WTC11 (cell line): ENCODE measurements at regions of chr19 and their contacts with region 1.

Region 1: DNA sequence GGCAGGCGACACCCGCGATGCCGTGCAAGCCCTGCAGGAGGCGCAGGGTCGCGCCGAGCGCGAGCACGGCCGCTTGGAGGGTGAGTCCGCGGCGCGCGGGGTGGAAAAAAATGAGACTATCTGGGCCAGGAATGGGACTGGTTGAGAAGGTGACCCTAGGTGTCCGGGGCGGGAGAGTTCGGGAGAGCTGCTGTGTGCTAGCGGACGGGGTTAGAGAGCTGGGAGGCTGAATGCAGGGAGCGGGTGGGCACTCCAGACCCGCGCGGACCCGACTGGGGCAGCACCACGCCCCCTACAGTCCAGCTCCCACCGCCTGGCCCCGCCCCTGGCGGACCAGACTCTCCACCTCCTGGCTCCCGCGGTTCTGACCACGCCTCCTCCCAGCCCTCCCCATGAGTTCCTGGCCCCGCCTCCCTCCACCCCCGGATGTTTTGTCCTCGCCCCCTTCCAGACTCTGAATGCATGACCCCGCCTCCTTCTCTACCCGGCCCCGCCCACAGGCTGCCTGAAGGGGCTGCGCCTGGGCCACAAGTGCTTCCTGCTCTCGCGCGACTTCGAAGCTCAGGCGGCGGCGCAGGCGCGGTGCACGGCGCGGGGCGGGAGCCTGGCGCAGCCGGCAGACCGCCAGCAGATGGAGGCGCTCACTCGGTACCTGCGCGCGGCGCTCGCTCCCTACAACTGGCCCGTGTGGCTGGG is 1.5 kb downstream of the CLEC11A start:
- DNase-seq: peak; percentile 100
- ATAC-seq: peak; percentile 74
- H3K4me3 Mint-ChIP-seq: peak overlapping the region; percentile 90
- H3K27ac Mint-ChIP-seq: peak overlapping the region; percentile 82
- H3K4me1 Mint-ChIP-seq: peaks cover 55% of the 10 kb centered on the region
- H3K27me3 Mint-ChIP-seq: peaks cover 43% of the 10 kb centered on the region
- CTCF ChIP-seq: peak; percentile 77

Region 2: DNA sequence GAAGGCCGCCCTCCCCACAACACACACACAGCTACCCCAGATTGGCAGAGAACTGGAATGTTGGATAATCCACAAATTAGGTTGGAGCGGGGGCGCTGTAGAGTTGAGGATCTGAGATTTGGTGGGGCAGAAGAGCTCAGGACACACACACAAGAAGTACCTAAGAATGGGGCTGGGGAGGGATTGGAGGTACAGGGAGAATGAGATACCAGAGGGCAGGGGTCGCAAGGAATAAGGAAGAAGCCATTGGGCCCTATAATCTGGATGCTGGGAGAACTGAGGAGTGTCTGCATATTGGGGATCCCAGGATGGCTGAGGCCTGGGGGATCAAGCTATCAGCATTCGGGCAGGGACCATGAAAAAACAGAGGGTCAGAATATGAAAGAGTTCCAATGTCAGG is 96.5 kb before region 1 on chr19:
- CTCF ChIA-PET with region 1: interaction called, 13 read pairs
- POLR2A ChIA-PET with region 1: no interaction called
- DNase-seq: no peak
- ATAC-seq: no peak; the same call in 1 of the 2 replicates
- H3K4me3 Mint-ChIP-seq: no peak overlapping the region
- H3K27ac Mint-ChIP-seq: no peak overlapping the region
- H3K4me1 Mint-ChIP-seq: no peaks in the 10 kb centered on the region
- H3K27me3 Mint-ChIP-seq: peaks cover 4% of the 10 kb centered on the region
- CTCF ChIP-seq: no peak

Region 3: GRCh38 chr19:50695251-50696093 is 29.2 kb before region 1 on chr19:
- CTCF ChIA-PET with region 1: interaction called, 11 read pairs
- POLR2A ChIA-PET with region 1: no interaction called
- DNase-seq: peak; percentile 61
- ATAC-seq: peak; percentile 64
- H3K4me3 Mint-ChIP-seq: peak overlapping the region; percentile 61
- H3K27ac Mint-ChIP-seq: no peak overlapping the region
- H3K4me1 Mint-ChIP-seq: peaks cover 16% of the 10 kb centered on the region
- H3K27me3 Mint-ChIP-seq: peaks cover 92% of the 10 kb centered on the region
- CTCF ChIP-seq: no peak

Region 4: GRCh38 chr19:50712833-50713232 is 11.8 kb before region 1 on chr19:
- CTCF ChIA-PET with region 1: interaction called, 18 read pairs
- POLR2A ChIA-PET with region 1: no interaction called
- DNase-seq: no peak
- ATAC-seq: no peak
- H3K4me3 Mint-ChIP-seq: no peak overlapping the region
- H3K27ac Mint-ChIP-seq: no peak overlapping the region
- H3K4me1 Mint-ChIP-seq: peaks cover 15% of the 10 kb centered on the region
- H3K27me3 Mint-ChIP-seq: peaks cover 30% of the 10 kb centered on the region
- CTCF ChIP-seq: no peak

Region 5: GRCh38 chr19:50777754-50778303 is 53.2 kb after region 1 on chr19:
- CTCF ChIA-PET with region 1: interaction called, 195 read pairs
- POLR2A ChIA-PET with region 1: interaction called, 7 read pairs
- DNase-seq: peak; percentile 71
- ATAC-seq: peak; percentile 54
- H3K4me3 Mint-ChIP-seq: peak overlapping the region; percentile 59
- H3K27ac Mint-ChIP-seq: 0 out of 2 replicates have a peak overlapping the region, but pooled peaks have one; percentile 51
- H3K4me1 Mint-ChIP-seq: peaks cover 24% of the 10 kb centered on the region
- H3K27me3 Mint-ChIP-seq: peaks cover 95% of the 10 kb centered on the region
- CTCF ChIP-seq: no peak

Region 6: DNA sequence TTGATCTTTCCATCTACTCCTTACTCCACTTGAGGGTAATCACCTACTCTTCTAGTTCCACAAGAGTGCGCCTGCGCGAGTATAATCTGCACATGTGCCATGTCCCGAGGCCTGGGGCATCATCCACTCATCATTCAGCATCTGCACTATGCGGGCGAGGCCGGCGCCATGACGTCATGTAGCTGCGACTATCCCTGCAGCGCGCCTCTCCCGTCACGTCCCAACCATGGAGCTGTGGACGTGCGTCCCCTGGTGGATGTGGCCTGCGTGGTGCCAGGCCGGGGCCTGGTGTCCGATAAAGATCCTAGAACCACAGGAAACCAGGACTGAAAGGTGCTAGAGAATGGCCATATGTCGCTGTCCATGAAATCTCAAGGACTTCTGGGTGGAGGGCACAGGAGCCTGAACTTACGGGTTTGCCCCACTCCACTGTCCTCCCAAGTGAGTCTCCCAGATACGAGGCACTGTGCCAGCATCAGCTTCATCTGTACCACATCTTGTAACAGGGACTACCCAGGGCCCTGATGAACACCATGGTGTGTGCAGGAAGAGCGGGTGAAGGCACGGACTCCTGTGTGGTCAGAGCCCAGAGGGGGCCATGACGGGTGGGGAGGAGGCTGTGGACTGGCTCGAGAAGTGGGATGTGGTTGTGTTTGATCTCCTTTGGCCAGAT is 145.9 kb after region 1 on chr19:
- CTCF ChIA-PET with region 1: no interaction called
- POLR2A ChIA-PET with region 1: no interaction called
- DNase-seq: peak; percentile 44
- ATAC-seq: peak; percentile 75
- H3K4me3 Mint-ChIP-seq: no peak overlapping the region
- H3K27ac Mint-ChIP-seq: no peak overlapping the region
- H3K4me1 Mint-ChIP-seq: no peaks in the 10 kb centered on the region
- H3K27me3 Mint-ChIP-seq: peaks cover 60% of the 10 kb centered on the region
- CTCF ChIP-seq: 0 out of 2 replicates have a peak, but pooled peaks have one; percentile 23

Region 7: GRCh38 chr19:50943074-50943828 is 218.6 kb after region 1 on chr19:
- CTCF ChIA-PET with region 1: no interaction called
- POLR2A ChIA-PET with region 1: no interaction called
- DNase-seq: no peak
- ATAC-seq: no peak
- H3K4me3 Mint-ChIP-seq: no peak overlapping the region
- H3K27ac Mint-ChIP-seq: no peak overlapping the region
- H3K4me1 Mint-ChIP-seq: no peaks in the 10 kb centered on the region
- H3K27me3 Mint-ChIP-seq: peaks cover 37% of the 10 kb centered on the region
- CTCF ChIP-seq: no peak